Adrenal gland (tissue), 19 donors: ENCODE measurements at regions of chr7 and their contacts with region 1.

Region 1: DNA sequence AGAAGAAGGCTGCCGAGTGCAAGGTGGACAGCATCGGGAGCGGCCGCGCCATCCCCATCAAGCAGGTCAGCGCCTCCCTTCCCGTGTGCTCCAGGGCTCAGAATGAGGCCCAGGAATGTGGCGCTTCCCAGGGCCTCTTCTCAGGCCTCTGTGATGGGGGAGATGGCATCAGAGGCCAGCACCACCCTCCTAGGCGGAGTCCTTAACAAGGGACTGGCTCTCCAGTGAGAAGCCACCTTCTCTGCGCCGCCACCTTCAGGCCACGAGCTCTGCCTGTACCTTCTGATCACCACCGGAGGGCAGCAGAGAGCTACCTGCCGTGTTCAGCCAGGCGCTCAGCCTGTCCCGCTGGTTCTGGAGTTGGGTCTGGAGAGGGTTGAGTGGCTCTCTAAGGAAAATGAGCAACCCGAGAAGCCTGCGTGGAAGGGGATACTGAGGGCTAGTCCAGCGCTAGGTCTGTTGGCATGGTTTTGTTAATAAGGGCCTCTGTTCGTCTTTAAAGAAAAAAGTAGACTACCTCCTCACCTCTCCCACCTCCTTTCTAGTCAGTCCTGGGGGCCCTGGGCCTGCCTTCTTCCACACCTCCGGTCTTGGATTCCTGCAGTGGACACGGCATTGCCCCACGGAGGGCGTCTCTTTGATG is 37.7 kb downstream of the AGAP3 start:
- DNase-seq: peak; percentile 78 to 93 (median 86)
- H3K4me3 ChIP-seq: no peak overlapping the region
- H3K27ac ChIP-seq: no peak overlapping the region
- H3K4me1 ChIP-seq: peaks cover 0 to 7% of the 10 kb centered on the region in 2 donors
- H3K27me3 ChIP-seq: no peaks in the 10 kb centered on the region
- CTCF ChIP-seq: peak; percentile 91 to 98 (median 94)
- POLR2A ChIP-seq: no peak

Region 2: GRCh38 chr7:151172273-151173141 is 48.6 kb after region 1 on chr7:
- intact Hi-C with region 1: loop called (anchors 2 to 5 kb)
- DNase-seq: peak; percentile 62 to 88 (median 79)
- H3K4me3 ChIP-seq: no peak overlapping the region
- H3K27ac ChIP-seq: no peak overlapping the region
- H3K4me1 ChIP-seq: peaks cover 0 to 6% of the 10 kb centered on the region in 2 donors
- H3K27me3 ChIP-seq: peaks cover 26% of the 10 kb centered on the region
- CTCF ChIP-seq: peak; percentile 99 to 100 (median 100)
- POLR2A ChIP-seq: no peak